Activated T-helper 1 cell treated with anti-CD3 and anti-CD28 coated beads, Interleukin-12 subunit alpha, Interleukin-12 subunit beta, Interleukin-2, Interleukin-4 antibody, amounts not matched to agents 30 ng/mL and 10 ng/mL and 1 ng/mL, durations not matched to agents 14 hours and 24 hours and 36 hours (primary cell): ENCODE measurements at regions of chr17 and their contacts with region 1.

Region 1: GRCh38 chr17:8955021-8955959 is 10.2 kb downstream of the PIK3R5 start:
- DNase-seq: no peak
- H3K4me3 Mint-ChIP-seq: peak overlapping the region; percentile 73
- H3K27ac Mint-ChIP-seq: peak overlapping the region; percentile 89
- H3K4me1 Mint-ChIP-seq: peaks cover 96% of the 10 kb centered on the region
- H3K27me3 Mint-ChIP-seq: no peaks in the 10 kb centered on the region

Region 2: DNA sequence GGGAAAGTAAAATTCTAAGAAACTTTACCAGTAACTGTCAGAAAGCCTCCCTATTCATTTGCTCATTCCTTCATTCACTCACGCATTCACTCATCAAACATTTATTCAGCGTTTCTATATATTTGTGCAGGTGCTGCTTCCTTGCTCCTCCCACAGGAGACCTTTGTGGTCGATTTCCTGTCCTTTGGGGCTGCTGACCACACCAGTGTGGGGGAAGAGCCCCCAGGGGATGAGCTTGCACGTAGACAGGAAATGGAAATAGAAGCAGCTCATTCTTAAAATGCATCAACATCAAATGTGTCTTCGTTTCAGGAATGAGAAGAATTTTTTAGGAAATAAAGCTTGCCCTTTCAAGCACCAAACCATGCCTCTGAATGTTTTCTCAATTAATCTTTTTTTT is 97.4 kb before region 1 on chr17:
- intact Hi-C with region 1: loop called (anchors 5 kb)
- DNase-seq: peak; percentile 44
- H3K4me3 Mint-ChIP-seq: peak overlapping the region; percentile 73
- H3K27ac Mint-ChIP-seq: peak overlapping the region; percentile 94
- H3K4me1 Mint-ChIP-seq: peaks cover 60% of the 10 kb centered on the region
- H3K27me3 Mint-ChIP-seq: no peaks in the 10 kb centered on the region

Region 3: DNA sequence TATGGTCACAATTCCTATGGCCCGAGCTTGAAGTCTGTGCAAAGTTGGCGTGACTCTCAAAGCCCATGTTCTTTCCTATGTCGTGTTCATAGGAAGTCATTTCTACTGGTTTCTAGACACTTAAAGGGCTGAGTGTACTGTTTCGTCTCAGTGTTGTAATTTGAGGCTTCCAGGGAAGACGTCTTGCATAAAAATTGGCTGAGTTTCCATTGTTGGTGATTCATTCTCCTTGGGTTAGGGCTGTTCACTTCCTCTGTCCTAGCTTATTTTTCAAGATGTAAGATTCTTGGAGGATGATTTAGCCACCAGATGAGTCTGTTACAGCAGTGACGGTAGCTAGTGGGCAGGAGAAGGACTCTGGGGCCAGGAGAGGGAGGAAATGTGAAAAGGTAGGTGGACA is 32.8 kb before region 1 on chr17:
- intact Hi-C with region 1: loop called (anchors 5 kb)
- DNase-seq: no peak
- H3K4me3 Mint-ChIP-seq: peak overlapping the region; percentile 9
- H3K27ac Mint-ChIP-seq: peak overlapping the region; percentile 87
- H3K4me1 Mint-ChIP-seq: peaks cover 19% of the 10 kb centered on the region
- H3K27me3 Mint-ChIP-seq: no peaks in the 10 kb centered on the region

Region 4: GRCh38 chr17:8935191-8935590 is 20.1 kb before region 1 on chr17:
- intact Hi-C with region 1: loop called (anchors 1 kb)
- DNase-seq: no peak
- H3K4me3 Mint-ChIP-seq: peak overlapping the region; percentile 68
- H3K27ac Mint-ChIP-seq: peak overlapping the region; percentile 93
- H3K4me1 Mint-ChIP-seq: peaks cover 59% of the 10 kb centered on the region
- H3K27me3 Mint-ChIP-seq: no peaks in the 10 kb centered on the region

Region 5: DNA sequence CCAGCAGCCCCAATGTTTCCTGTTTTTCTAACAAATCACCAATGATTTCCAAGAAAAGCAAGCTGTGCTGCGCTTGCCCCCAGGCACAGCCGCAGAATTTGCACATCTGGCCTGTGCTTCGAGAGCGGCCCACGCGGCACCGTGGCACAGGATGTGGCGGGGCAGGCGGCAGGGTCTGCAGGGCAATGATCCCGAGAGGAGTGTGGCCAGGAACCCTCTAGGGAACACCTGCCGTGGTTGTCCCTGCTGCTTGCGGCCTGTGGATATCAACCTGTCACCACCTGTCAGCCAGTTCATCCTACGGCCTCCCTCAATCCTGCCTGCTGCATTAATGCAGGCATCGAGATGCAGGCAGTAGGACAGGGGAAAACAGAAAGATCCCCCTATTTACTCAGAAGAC is 13.8 kb before region 1 on chr17:
- intact Hi-C with region 1: loop called (anchors 1 kb)
- DNase-seq: peak; percentile 68
- H3K4me3 Mint-ChIP-seq: peak overlapping the region; percentile 67
- H3K27ac Mint-ChIP-seq: peak overlapping the region; percentile 97
- H3K4me1 Mint-ChIP-seq: peaks cover 60% of the 10 kb centered on the region
- H3K27me3 Mint-ChIP-seq: no peaks in the 10 kb centered on the region